ENCODE measurements at regions of chr2 and their contacts with region 1.

Region 1: DNA sequence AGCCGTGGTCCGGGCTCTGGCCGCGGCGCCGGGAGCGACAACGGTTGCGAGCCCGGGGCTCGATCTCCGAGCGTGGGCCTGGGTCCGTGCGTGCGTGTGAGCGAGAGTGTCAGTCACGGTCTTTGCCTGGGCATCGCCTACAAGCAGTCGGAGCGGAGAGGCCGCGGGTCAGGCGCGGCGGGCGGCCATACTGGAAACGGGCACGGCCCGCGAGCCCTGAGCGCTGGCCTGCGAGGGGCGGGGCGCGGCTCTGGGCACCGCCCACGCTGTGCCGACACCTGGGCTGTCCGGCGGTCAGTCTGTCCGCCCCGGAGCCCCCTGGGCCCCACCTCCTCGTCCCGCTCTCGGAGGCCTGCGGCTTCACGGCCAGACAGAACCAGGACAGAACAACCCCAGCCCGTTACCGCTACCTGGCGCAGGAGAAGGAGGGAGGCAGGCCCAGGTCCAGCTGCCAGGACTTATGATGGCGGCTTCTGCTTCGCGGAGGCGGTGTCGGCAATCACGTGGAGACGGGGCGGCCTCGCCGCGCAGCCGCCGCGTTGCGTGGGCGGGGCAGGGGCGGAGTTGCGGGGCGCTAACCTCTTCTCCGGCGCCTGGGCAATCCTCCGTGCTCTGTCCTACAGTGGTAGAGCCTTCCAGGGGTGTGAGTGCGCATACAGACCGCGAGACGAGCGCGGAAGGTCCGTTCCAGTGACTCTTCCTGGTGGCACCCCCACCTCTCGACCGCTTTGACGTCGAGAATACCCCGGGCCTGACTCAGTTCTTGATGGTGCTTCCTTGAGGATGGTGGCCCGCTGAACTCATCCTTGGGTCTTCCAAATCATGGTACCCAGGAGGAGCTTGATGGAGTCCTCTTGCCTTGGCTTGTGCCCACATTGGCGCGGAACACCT is at the start of gene TMEM131:
- DNase-seq: peak; percentile 96
- H3K4me3 ChIP-seq: peak within 1 kb of the TSS; percentile 57 to 96 (median 86)
- H3K27ac ChIP-seq: peak within 1 kb of the TSS; percentile 87 to 98 (median 95)
- H3K4me1 ChIP-seq: peaks cover 0 to 39% (median 24%) of the 10 kb centered on the region in 4 donors
- H3K27me3 ChIP-seq: no peaks in the 10 kb centered on the region
- CTCF ChIP-seq: no peak
- EP300 ChIP-seq: no peak
- POLR2A ChIP-seq: peak in 1 of 2 donors; percentile 24
- total RNA-seq, gene TMEM131: 20.6 to 37.5 (median 30.5) TPM

Region 2: DNA sequence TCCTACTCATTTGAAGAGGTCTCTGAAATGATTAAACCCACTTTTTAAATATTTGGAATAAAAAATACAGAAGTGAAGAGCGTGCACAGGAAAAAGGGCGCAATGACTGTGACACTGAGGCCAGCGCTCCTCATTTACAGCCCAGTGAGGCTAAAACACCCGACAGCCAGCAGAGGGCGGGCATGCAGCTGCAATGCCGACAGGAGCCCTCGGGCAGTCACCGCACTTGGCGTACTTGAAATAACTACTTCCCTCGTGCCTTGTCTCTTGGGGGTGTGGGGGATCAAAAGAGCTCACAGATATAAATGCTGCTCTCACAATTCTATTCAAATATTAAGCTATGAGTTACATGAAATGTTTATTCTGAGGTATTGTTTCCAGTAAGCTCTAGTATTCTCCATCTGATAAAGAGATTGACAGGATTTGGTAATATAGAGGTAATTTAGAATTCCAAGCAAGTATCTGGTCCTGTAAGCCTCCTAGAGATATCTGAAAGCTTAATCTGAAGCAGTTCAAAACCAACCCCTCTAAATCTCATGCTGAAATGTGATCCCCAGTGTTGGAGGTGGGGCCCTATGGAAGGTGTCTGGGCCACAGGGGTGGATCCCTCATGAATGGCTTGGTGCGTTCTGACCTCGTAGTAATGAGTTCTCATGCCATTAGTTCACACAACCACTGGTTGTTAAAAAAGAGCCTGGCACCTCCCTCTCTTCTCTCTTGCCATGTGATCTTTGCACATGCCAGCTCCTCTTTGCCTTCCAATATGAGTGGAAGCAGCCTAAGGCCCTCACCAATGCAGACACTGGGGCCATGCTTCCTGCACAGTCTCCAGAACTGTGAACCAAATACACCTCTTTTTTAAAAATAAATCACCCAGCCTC is 189.0 kb before region 1 on chr2:
- intact Hi-C with region 1: loop called (anchors 5 kb)
- DNase-seq: peak; percentile 89
- H3K4me3 ChIP-seq: no peak overlapping the region
- H3K27ac ChIP-seq: peak overlapping the region in 1 of 4 donors; percentile 0
- H3K4me1 ChIP-seq: peaks cover 0 to 5% (median 0%) of the 10 kb centered on the region in 4 donors
- H3K27me3 ChIP-seq: no peaks in the 10 kb centered on the region
- CTCF ChIP-seq: peak; percentile 84 to 94 (median 88)
- EP300 ChIP-seq: no peak
- POLR2A ChIP-seq: no peak

Region 3: DNA sequence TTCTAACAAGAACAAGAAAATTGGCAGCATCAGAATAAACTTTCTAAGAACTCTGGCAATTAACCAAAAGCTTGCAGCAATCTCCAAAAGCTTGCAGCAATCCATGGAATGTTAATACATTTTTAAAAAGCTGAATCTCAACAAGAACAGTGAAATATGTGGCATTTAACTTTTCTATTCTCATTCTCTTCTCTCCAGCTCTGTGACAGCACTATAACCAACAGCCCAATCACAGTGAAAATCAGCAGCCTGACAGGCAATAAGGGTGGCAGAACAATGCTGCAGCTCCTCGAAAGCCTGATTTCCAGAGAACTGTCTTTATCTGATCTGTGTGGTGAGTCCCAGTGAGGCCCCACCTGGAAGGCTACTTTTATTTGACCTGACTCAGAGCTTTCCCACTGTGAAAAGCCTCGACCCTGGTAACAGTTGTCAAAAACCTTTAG is 60.2 kb before region 1 on chr2:
- intact Hi-C with region 1: loop called (anchors 10 kb)
- DNase-seq: no peak
- H3K4me3 ChIP-seq: no peak overlapping the region
- H3K27ac ChIP-seq: no peak overlapping the region
- H3K4me1 ChIP-seq: peaks cover 0 to 53% (median 35%) of the 10 kb centered on the region in 4 donors
- H3K27me3 ChIP-seq: no peaks in the 10 kb centered on the region
- CTCF ChIP-seq: no peak
- EP300 ChIP-seq: no peak
- POLR2A ChIP-seq: no peak

Region 4: GRCh38 chr2:98163611-98164010 is 167.6 kb after region 1 on chr2:
- intact Hi-C with region 1: loop called (anchors 2 kb)
- DNase-seq: no peak
- H3K4me3 ChIP-seq: no peak overlapping the region
- H3K27ac ChIP-seq: peak overlapping the region; percentile 9 to 79 (median 70)
- H3K4me1 ChIP-seq: peaks cover 0 to 45% (median 36%) of the 10 kb centered on the region in 4 donors
- H3K27me3 ChIP-seq: no peaks in the 10 kb centered on the region
- CTCF ChIP-seq: no peak
- EP300 ChIP-seq: no peak
- POLR2A ChIP-seq: no peak

Region 5: GRCh38 chr2:98212092-98212797 is 216.3 kb after region 1 on chr2:
- intact Hi-C with region 1: loop called (anchors 2 kb)
- DNase-seq: no peak
- H3K4me3 ChIP-seq: no peak overlapping the region
- H3K27ac ChIP-seq: peak overlapping the region in 3 of 4 donors; percentile 62 to 80 (median 71)
- H3K4me1 ChIP-seq: peaks cover 0 to 20% (median 18%) of the 10 kb centered on the region in 4 donors
- H3K27me3 ChIP-seq: no peaks in the 10 kb centered on the region
- CTCF ChIP-seq: no peak
- EP300 ChIP-seq: peak in 2 of 4 donors; percentile 28 to 39
- POLR2A ChIP-seq: no peak

Region 6: DNA sequence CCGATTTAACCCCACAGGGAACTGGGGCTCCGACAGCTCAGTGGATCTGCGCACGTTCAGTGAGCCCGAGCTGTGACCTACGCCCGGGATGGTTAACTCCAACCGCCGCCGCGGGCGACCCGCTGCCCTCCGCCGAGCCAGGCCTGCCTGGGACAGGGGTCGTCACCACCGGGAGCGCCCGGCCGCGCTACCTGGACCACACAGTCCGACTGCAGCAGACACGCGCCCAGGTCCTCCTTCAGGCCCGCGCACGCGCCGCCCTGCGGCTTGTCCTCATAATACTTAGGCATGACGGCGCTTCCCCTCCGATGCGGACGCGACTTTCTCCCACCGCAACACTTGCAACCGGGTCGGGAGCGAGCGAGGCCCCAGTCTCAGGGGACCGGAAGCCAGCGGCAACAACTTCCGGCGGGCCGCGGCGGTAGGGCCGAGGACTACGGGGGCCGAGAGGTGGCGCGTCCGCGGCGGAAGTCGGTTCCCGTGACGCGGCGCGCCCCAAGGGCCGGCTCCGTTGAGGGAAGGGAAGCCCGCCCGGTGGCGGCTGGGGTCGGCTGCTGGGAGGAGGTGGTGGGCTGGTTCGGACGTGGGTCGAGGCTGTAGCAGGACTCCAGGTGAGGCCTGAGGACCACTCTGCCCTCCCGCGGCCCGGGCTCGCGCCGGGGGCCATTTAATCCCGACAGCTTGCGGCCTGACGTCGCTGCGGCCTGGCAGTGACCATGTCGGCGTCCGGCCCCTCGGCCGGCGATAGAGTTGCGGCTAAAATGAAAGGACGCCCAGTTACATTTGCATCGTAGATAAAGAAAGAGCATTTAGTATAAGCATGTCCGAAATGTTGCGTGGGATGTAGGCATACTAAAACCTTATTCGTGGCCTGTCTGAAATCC is 612.4 kb after region 1 on chr2 and contains the starts of genes COA5 and UNC50:
- intact Hi-C with region 1: loop called (anchors 10 kb)
- DNase-seq: peak; percentile 94
- H3K4me3 ChIP-seq: peak within 1 kb of the TSS; percentile 56 to 95 (median 93)
- H3K27ac ChIP-seq: peak within 1 kb of the TSS; percentile 93 to 97 (median 94)
- H3K4me1 ChIP-seq: peaks cover 0 to 60% (median 48%) of the 10 kb centered on the region in 4 donors
- H3K27me3 ChIP-seq: no peaks in the 10 kb centered on the region
- CTCF ChIP-seq: no peak
- EP300 ChIP-seq: peak in 1 of 4 donors; percentile 36
- POLR2A ChIP-seq: peak; percentile 71 to 83
- total RNA-seq, gene COA5: 35.5 to 53.8 (median 43.4) TPM
- total RNA-seq, gene UNC50: 39.4 to 61.0 (median 52.7) TPM

Measured in sigmoid colon (tissue), 7 donors.